Astrocyte of the cerebellum (primary cell): ENCODE measurements at regions of chr21 and their contacts with region 1.

Region 1: DNA sequence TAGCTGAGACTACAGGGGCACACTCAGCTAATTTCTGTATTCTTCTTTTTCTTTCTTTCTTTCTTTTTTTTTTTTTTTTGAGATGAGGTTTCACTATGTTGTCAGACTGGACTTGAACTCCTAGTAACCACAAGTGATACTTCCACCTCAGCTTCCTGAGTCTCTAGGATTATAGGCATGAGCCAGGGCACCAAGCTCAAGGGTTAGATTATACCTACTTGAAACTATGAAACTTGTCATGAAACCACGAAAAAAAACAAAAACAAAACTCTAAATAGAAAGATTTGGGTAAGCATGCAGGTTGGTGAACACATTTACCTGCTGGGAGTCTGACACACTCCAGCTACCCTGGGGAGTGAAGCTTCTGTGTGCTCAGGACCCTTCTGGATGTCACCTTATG is 2250.4 kb downstream of the MRPL39 start:
- DNase-seq: no peak
- H3K4me3 ChIP-seq: no peak overlapping the region
- CTCF ChIP-seq: no peak

Region 2: DNA sequence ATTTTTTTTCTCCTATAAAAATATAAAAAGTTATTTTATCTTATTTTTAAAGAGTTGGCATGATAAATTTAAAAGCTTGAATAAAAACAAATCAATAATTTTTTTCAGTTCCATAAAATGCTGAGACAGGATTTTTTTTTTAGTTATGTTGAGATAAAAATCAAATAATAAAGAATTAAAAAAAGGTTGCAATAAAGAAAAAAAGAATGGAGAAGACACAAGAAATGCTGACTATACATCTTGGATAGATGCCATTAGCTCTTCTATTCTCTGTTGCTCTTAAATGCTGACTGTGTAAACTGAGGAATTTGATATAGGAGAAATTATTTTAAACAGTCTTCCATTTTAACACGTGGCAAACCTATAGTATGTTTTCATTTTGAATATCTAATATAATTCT is 48.2 kb before region 1 on chr21:
- in situ Hi-C with region 1: no loop called
- DNase-seq: no peak
- H3K4me3 ChIP-seq: no peak overlapping the region
- CTCF ChIP-seq: no peak

Region 3: DNA sequence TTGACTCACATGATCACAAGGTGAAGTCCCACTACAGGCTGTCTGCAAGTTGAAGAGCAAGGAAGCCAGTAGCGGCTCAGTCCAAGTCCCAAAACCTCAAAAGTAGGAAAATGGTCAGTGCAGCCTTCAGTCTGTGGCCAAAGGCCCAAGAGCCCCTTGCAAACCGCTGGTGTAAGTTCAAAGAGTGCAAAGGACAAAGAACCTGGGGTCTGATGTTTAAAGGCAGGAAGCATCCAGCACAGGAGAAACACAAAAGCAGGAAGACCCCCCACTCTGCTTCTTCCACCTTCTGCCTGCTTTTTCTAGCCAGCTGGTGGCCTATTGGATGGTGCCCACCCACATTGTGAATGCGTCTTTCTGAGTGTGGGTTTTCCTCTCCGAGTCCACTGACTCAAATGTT is 27.8 kb after region 1 on chr21:
- in situ Hi-C with region 1: no loop called
- DNase-seq: no peak
- H3K4me3 ChIP-seq: no peak overlapping the region
- CTCF ChIP-seq: no peak

Region 4: GRCh38 chr21:23401278-23401677 is 44.4 kb after region 1 on chr21:
- in situ Hi-C with region 1: loop called (anchors 10 kb)
- DNase-seq: no peak
- H3K4me3 ChIP-seq: no peak overlapping the region
- CTCF ChIP-seq: peak; percentile 31